ENCODE measurements at regions of chr11 and their contacts with region 1.

Region 1: DNA sequence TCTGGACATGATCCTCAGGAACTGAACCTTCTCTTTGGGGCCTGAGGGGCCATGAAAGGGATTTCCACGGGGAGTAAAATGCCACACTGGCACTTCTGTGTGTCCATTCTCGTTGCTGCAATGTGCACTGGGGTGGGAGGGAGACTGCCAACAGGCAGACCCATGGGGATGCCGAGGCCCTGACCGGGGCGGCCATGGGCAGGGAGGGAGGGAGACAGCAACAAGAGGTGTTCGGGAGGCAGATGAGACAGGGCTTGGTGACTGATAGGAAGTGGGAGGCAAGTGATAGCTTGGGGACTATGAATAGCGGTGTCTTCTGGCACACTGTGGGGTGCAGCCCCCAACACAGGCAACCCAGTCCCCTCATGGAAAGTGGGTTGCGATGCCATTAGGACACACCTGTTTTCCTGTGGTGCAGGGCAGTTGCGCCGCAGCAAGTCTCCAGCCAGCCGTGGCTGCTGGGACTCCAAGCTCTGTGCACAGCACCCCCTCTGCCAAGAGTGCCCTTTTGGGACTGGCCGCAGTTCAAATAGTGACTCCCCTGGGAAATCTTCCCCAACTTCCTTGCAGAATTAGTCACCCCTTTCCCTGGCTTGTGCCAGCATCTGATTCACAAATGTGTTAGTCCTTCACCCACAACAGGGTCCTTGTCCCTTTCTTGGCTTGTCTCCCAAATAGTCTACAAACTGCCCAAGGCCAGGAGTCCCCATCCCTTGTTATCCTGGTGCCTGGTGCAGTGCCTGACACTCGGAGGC is 88.8 kb downstream of the CHST1 start:
- DNase-seq: no peak

Region 2: DNA sequence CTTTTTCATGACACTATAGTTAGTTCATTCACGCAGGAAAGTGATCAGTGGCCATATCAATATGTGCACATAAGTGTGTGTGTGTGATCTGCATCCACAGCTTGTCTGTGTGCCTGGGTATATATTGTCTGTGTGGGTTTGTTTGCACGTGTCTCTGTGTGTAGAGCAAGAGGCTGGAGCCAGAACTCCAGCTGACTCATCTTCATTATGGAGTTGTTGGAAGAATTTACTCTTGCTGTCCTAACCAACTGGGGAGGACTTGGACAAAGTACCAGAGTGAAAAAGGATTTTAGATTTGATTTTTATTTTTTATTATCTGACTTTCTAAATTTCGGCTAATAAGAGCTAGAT is 689.9 kb before region 1 on chr11:
- intact Hi-C with region 1: no loop called
- DNase-seq: no peak

Region 3: GRCh38 chr11:45507916-45508315 is 68.7 kb before region 1 on chr11:
- intact Hi-C with region 1: loop called in 1 of 2 experiments (anchors 2 kb)
- DNase-seq: no peak